CD4-positive, alpha-beta T cell (primary cell): ENCODE measurements at regions of chr18 and their contacts with region 1.

Region 1: DNA sequence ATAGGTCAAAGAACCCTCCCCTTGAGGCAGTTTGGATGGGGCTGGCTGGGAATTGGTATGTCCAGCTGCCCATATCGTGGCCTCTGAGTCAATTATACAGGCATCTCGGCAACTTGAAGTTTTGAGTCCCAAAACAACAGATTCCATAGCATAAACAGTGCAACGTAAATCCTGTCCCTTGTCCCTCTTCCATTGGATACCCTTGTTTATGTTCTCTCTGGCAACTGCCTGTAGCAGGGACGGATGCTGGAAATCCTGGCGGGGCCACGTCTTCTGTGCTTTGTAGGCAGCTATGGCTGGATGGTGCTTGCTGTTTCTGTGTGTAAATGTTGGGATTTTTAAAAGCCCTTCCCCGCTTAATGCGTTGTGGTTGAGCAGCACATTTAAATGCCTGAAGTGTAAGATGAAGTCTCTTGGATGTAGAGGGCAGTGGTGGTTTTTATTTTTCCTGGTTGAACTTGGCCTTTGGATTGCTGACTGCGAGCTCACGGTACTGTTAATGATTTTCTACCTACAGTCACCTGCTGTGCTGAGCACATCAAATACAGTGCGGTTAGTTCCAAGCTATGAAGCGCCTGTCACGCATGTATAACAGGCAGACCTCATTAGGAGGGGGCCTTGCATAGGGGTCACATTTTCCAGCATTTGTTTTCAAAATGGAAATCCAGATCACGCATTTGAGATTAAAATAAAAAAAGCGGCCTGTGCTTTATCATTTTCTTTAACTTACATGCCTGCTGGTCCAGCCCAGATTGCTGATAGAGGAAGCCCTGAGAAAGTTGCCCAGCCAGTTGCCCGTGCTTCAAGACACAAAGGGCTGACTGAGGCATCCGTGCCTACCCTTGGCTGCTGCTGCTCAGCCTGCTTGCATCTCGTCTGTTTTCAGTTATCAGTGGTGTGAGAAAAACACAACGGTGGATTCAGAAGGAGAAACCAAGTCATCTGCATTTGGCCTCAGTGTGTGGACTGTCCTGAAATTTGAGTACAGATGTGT is 84.7 kb downstream of the NEDD4L start:
- DNase-seq: no peak
- ATAC-seq: no peak
- H3K4me3 ChIP-seq: no peak overlapping the region
- H3K4me3 Mint-ChIP-seq: no peak overlapping the region
- H3K27ac ChIP-seq: no peak overlapping the region
- H3K27ac Mint-ChIP-seq: no peak overlapping the region
- H3K4me1 ChIP-seq: peaks cover 2% of the 10 kb centered on the region
- H3K4me1 Mint-ChIP-seq: no peaks in the 10 kb centered on the region
- H3K27me3 ChIP-seq: no peaks in the 10 kb centered on the region
- H3K27me3 Mint-ChIP-seq: peaks cover 17% of the 10 kb centered on the region
- CTCF ChIP-seq: no peak

Region 2: DNA sequence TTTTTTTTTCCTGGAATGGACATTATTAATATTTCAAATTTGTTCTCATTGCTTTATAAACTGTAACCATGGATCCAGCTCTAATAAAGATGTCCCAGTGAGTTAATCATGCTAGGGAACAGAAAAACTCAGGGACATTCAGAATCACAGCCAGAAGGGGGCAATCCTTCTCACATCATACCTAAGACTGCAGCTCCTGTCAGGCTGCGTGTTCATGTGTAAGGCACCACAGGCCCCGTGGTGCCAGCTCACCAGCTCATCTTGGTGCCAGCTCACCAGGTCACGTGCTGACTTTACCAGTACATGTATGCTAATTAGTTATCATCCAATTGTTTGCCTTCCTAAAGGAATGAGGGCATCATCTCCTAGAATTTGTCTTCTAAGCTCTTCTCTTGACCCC is 169.4 kb before region 1 on chr18:
- CTCF ChIA-PET with region 1: no interaction called
- POLR2A ChIA-PET with region 1: no interaction called
- intact Hi-C with region 1: loop called in 1 of 2 experiments (anchors 5 kb)
- DNase-seq: peak in 3 of 14 experiments; percentile 3 to 21 (median 12)
- ATAC-seq: no peak
- H3K4me3 ChIP-seq: no peak overlapping the region
- H3K4me3 Mint-ChIP-seq: no peak overlapping the region
- H3K27ac ChIP-seq: no peak overlapping the region
- H3K27ac Mint-ChIP-seq: no peak overlapping the region
- H3K4me1 ChIP-seq: no peaks in the 10 kb centered on the region
- H3K4me1 Mint-ChIP-seq: no peaks in the 10 kb centered on the region
- H3K27me3 ChIP-seq: peaks cover 6 to 24% of the 10 kb centered on the region in 2 experiments
- H3K27me3 Mint-ChIP-seq: peaks cover 23% of the 10 kb centered on the region
- CTCF ChIP-seq: no peak